ENCODE measurements at regions of chr6 and their contacts with region 1.

Region 1: GRCh38 chr6:116511404-116512110 is at the start of gene CALHM5:
- DNase-seq: peak; percentile 91
- H3K4me3 ChIP-seq: peak within 1 kb of the TSS; percentile 26 to 82 (median 35)
- H3K27ac ChIP-seq: peak within 1 kb of the TSS; percentile 95
- H3K4me1 ChIP-seq: peaks cover 19% of the 10 kb centered on the region
- H3K27me3 ChIP-seq: no peaks in the 10 kb centered on the region
- CTCF ChIP-seq: peak; percentile 55 to 67
- POLR2A ChIP-seq: peak; percentile 67
- total RNA-seq, gene CALHM5: 6.6 and 7.1 TPM in 2 replicates

Region 2: GRCh38 chr6:115753446-115753845 is 758.1 kb before region 1 on chr6:
- CTCF ChIA-PET with region 1: no interaction called
- POLR2A ChIA-PET with region 1: no interaction called
- dilution Hi-C with region 1: no loop called
- intact Hi-C with region 1: no loop called
- DNase-seq: no peak
- H3K4me3 ChIP-seq: no peak overlapping the region
- H3K27ac ChIP-seq: no peak overlapping the region
- H3K4me1 ChIP-seq: no peaks in the 10 kb centered on the region
- H3K27me3 ChIP-seq: no peaks in the 10 kb centered on the region
- CTCF ChIP-seq: no peak
- POLR2A ChIP-seq: no peak

Region 3: GRCh38 chr6:116371120-116371917 is 140.2 kb before region 1 on chr6:
- CTCF ChIA-PET with region 1: interaction called, 12 read pairs
- POLR2A ChIA-PET with region 1: interaction called, 3 read pairs
- dilution Hi-C with region 1: no loop called
- intact Hi-C with region 1: loop called (anchors 5 kb)
- DNase-seq: peak; percentile 83
- H3K4me3 ChIP-seq: peak overlapping the region; percentile 71 to 82 (median 81)
- H3K27ac ChIP-seq: peak overlapping the region; percentile 32
- H3K4me1 ChIP-seq: peaks cover 6% of the 10 kb centered on the region
- H3K27me3 ChIP-seq: no peaks in the 10 kb centered on the region
- CTCF ChIP-seq: no peak
- POLR2A ChIP-seq: no peak

Region 4: GRCh38 chr6:116500969-116501433 is 10.6 kb before region 1 on chr6:
- CTCF ChIA-PET with region 1: interaction called, 29 read pairs
- POLR2A ChIA-PET with region 1: no interaction called
- dilution Hi-C with region 1: no loop called
- intact Hi-C with region 1: no loop called
- DNase-seq: no peak
- H3K4me3 ChIP-seq: no peak overlapping the region
- H3K27ac ChIP-seq: no peak overlapping the region
- H3K4me1 ChIP-seq: no peaks in the 10 kb centered on the region
- H3K27me3 ChIP-seq: peaks cover 0 to 2% of the 10 kb centered on the region in 2 experiments
- CTCF ChIP-seq: no peak
- POLR2A ChIP-seq: no peak

Region 5: DNA sequence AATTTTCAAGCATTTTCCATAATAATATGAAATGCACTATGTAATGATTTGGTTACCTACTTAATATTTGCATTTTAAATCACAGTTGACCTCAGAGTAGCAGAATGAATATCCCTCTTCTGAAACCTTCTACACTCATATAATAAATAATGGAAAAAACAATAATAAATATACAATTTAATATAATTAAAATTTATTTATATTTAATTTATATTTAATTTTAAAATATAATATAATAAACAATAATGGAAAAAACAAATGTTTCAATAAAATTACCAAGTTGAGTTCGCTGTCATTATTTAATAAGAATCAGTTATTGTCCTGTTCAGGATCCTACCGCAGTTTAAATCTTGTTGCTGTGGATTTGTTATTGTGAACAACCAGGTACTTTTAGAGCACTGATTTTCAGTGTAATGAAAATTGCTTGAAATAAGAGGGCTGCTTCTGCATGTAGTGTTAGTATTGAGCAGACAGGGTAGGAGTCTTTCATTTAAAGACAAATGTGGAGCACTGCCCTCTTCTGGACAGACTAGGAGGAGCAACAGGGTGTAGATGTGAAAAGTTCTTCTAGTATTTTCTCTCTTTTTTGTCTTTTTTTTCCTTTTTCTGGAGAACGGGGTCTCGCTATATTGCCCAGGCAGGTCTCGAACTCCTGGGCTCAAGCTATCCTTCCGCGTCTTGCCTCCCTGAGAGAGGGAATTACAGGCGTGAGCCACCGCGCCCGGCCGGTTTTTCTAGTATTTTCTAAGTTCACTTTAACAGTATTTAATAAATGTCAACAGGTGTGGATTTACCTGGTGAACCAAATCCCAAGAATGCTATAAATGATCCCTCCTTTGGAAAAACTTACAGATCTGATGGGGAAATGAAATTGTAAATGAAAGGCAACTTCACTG is 20.4 kb after region 1 on chr6:
- CTCF ChIA-PET with region 1: interaction called, 72 read pairs
- POLR2A ChIA-PET with region 1: no interaction called
- dilution Hi-C with region 1: no loop called
- intact Hi-C with region 1: loop called (anchors 1 kb)
- DNase-seq: peak; percentile 86
- H3K4me3 ChIP-seq: no peak overlapping the region
- H3K27ac ChIP-seq: no peak overlapping the region
- H3K4me1 ChIP-seq: peaks cover 16% of the 10 kb centered on the region
- H3K27me3 ChIP-seq: peaks cover 0 to 2% of the 10 kb centered on the region in 2 experiments
- CTCF ChIP-seq: peak; percentile 59 to 74
- POLR2A ChIP-seq: no peak

Region 6: DNA sequence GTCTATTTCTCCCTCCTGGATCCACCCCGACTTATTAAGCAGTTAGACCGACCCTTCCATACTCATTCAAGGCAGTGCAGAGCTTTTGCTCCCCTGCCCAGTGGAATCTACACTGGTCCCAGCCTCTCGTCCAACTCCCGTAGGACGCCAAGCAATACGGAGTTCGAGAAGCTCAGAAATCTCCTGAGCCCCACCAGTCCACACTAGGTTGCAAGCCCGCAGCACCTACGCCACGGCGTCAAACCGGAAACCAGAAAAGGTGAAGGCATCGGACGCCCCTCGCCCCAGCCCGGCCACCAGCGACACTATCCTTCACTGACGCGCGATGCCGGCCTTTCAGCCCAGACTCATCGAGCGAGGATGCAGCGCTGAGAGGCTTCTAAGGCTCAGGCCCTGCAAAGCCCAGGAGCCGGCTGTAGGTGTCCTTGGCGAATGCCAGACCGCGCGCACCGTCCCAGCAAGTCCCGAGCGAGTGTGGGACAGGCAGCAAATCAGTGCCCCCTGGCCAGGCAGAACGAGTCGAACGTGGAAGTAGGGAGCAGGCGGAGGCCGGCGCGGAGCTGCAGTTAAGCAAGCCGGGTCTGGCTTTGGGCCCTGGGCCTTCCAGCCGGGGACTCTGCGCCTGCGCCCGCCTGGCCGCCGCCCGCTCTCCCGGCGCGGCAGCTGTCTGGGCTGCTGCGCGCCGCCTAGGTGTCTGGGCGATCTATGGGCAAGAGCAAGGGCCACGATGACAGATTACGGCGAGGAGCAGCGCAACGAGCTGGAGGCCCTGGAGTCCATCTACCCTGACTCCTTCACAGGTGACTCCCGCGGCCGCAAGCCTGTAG is 59.5 kb after region 1 on chr6 and contains the start of gene RWDD1:
- CTCF ChIA-PET with region 1: interaction called, 34 read pairs
- POLR2A ChIA-PET with region 1: interaction called, 4 read pairs
- dilution Hi-C with region 1: no loop called
- intact Hi-C with region 1: loop called (anchors 1 kb)
- DNase-seq: peak; percentile 99
- H3K4me3 ChIP-seq: peak within 1 kb of the TSS; percentile 87 to 98 (median 98)
- H3K27ac ChIP-seq: peak within 1 kb of the TSS; percentile 84
- H3K4me1 ChIP-seq: peaks cover 33% of the 10 kb centered on the region
- H3K27me3 ChIP-seq: no peaks in the 10 kb centered on the region
- CTCF ChIP-seq: no peak
- POLR2A ChIP-seq: peak; percentile 89
- total RNA-seq, gene RWDD1: 37.9 and 44.2 TPM in 2 replicates

Region 7: DNA sequence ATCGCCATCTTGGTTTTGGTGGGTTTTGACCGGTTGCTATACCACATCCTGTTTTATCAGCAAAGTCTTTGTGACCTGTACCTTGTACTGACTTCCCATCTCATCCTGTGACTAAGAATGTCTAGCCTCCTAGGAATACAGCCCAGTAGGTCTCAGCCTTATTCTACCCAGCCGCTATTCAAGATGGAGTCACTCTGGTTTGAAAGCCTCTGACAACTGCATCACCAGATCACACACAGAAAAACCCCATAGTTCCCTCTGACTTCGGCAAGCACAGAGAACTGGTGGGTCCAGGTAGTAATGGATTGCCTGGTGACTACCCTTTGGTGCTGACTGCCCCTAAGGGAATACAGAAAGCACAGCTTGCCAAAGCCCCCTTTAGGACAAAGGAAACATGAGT is 94.4 kb after region 1 on chr6:
- CTCF ChIA-PET with region 1: no interaction called
- POLR2A ChIA-PET with region 1: no interaction called
- dilution Hi-C with region 1: no loop called
- intact Hi-C with region 1: no loop called
- DNase-seq: no peak
- H3K4me3 ChIP-seq: no peak overlapping the region
- H3K27ac ChIP-seq: no peak overlapping the region
- H3K4me1 ChIP-seq: no peaks in the 10 kb centered on the region
- H3K27me3 ChIP-seq: no peaks in the 10 kb centered on the region
- CTCF ChIP-seq: no peak
- POLR2A ChIP-seq: no peak